Activated CD4-positive, alpha-beta T cell treated with anti-CD3 and anti-CD28 coated beads, Interleukin-2, amount 10 ng/mL, durations not matched to agents 7 days and 5 days (primary cell): ENCODE measurements at regions of chr2 and their contacts with region 1.

Region 1: DNA sequence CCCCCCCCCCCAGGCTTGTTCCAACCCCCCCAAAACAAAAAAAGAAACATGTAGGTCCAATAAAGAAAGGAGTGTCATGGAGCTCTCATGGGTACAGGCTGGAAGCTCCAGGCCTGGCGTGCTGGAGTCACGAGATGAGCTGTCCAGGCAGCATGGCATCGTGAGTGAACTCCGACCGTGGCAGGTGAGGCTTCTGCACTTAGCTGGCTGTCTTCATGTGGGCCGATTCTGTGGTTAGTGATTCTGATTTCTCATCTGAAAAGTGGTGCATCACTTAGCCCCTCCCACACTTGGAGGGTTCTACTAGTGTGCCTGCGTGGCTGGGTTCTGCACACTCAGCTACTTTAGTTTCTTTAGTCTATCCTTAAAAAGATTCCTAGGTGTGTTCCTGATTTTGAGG is 126.4 kb upstream of the MGAT5 start:
- DNase-seq: peak; percentile 58
- H3K4me3 Mint-ChIP-seq: no peak overlapping the region
- H3K27ac Mint-ChIP-seq: no peak overlapping the region
- H3K4me1 Mint-ChIP-seq: peaks cover 57% of the 10 kb centered on the region
- H3K27me3 Mint-ChIP-seq: no peaks in the 10 kb centered on the region

Region 2: DNA sequence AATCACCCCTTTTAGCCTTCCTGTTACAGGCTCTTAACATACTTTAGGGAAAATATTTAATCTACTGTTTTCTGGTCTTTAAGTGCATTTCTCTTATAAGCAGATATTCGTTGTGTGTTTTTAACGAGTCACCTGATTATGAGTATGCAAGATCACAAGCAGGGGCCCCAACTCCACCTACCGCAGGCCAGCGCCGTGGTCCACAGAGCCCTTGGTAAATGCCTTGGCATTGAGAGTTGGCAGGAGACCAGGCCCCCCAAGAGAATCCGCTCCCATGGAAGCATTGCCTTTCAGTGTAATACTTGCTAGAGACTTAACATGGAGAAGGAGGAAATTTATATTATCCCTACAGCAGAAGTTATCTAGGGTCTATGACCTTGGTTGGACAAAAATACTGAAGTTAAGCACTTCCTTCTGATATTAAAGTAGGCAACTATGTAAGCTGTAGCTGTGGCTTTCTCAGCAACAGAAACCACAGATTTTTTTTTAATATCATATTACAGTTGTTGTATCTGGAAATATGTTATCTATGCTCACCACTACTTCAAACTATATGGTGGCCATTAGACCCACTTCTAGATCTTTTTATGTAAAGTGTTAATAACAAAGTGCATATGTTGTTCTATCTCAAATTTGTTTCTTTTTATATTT is 115.4 kb before region 1 on chr2:
- CTCF ChIA-PET with region 1: no interaction called
- POLR2A ChIA-PET with region 1: no interaction called
- DNase-seq: no peak
- H3K4me3 Mint-ChIP-seq: no peak overlapping the region
- H3K27ac Mint-ChIP-seq: no peak overlapping the region
- H3K4me1 Mint-ChIP-seq: no peaks in the 10 kb centered on the region
- H3K27me3 Mint-ChIP-seq: no peaks in the 10 kb centered on the region

Region 3: GRCh38 chr2:134107402-134107801 is 20.1 kb before region 1 on chr2:
- CTCF ChIA-PET with region 1: no interaction called
- POLR2A ChIA-PET with region 1: no interaction called
- DNase-seq: no peak
- H3K4me3 Mint-ChIP-seq: no peak overlapping the region
- H3K27ac Mint-ChIP-seq: no peak overlapping the region
- H3K4me1 Mint-ChIP-seq: peaks cover 11% of the 10 kb centered on the region
- H3K27me3 Mint-ChIP-seq: peaks cover 2% of the 10 kb centered on the region

Region 4: DNA sequence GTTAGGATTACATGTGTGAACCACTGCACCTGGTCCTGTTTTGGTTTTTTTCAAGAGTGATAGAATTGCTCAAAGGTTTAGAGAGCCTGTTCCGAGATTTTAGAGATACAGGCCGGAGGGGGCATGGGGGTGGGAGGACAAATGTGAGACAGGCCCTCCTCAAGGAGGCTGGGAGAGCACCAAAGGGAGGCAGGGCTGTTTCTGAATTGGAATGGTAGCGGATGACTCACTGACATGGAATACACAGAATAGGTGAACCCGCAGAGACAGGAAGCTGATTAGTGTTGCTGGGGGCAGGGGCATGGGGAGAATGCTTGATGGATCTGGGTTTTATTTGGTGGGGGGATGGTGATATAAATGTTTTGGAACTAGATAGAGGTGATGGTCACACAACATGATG is 15.4 kb after region 1 on chr2:
- CTCF ChIA-PET with region 1: no interaction called
- POLR2A ChIA-PET with region 1: no interaction called
- DNase-seq: no peak
- H3K4me3 Mint-ChIP-seq: no peak overlapping the region
- H3K27ac Mint-ChIP-seq: no peak overlapping the region
- H3K4me1 Mint-ChIP-seq: peaks cover 36% of the 10 kb centered on the region
- H3K27me3 Mint-ChIP-seq: no peaks in the 10 kb centered on the region

Region 5: GRCh38 chr2:134207564-134208209 is 80.2 kb after region 1 on chr2:
- CTCF ChIA-PET with region 1: interaction called, 3 read pairs
- POLR2A ChIA-PET with region 1: interaction called, 13 read pairs
- DNase-seq: peak; percentile 62
- H3K4me3 Mint-ChIP-seq: no peak overlapping the region
- H3K27ac Mint-ChIP-seq: peak overlapping the region; percentile 7
- H3K4me1 Mint-ChIP-seq: peaks cover 14% of the 10 kb centered on the region
- H3K27me3 Mint-ChIP-seq: no peaks in the 10 kb centered on the region